Mammary epithelial cell (primary cell): ENCODE measurements at regions of chr15 and their contacts with region 1.

Region 1: DNA sequence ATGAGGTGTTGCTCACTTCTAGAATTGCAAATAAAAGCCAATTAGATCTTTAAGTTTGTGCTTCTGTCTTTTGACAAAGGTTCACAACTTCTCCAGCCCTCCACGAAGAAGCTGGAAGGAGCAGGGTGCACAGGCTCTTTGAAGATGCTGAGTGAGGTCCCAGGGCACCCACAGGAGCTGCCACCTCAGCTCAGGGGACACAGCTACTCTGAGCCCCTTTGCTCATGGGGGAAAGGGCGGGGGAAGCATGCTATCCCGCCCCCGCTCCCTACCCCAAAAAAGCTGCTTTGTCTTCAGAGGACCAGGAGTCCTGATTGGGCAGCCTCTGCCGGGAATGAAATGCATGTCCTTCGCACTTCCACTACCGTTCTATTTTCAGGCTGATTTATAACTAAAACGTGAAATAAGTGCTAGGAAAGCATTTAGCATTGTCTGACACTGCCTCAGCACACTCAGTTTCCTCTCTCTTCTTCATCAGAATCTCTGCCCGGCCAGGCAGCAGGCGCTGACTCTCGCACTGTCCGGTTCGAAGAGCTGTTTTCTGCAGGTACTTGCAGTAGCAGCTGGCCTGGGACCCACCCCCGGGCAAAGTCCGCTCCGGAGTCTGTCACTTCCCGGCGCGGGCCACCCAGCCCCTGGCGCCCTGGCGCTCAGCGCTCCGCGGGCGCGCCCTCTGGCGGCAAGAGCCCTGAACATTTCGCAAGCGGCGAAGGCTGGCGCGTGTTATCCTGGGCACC is 45.5 kb upstream of the KLHL25 start:
- DNase-seq: peak; percentile 63
- H3K4me3 ChIP-seq: peak overlapping the region in 2 of 3 experiments; percentile 3 to 35
- H3K27ac ChIP-seq: no peak overlapping the region
- H3K4me1 ChIP-seq: peaks cover 4% of the 10 kb centered on the region
- H3K27me3 ChIP-seq: no peaks in the 10 kb centered on the region
- CTCF ChIP-seq: peak; percentile 55 to 97

Region 2: DNA sequence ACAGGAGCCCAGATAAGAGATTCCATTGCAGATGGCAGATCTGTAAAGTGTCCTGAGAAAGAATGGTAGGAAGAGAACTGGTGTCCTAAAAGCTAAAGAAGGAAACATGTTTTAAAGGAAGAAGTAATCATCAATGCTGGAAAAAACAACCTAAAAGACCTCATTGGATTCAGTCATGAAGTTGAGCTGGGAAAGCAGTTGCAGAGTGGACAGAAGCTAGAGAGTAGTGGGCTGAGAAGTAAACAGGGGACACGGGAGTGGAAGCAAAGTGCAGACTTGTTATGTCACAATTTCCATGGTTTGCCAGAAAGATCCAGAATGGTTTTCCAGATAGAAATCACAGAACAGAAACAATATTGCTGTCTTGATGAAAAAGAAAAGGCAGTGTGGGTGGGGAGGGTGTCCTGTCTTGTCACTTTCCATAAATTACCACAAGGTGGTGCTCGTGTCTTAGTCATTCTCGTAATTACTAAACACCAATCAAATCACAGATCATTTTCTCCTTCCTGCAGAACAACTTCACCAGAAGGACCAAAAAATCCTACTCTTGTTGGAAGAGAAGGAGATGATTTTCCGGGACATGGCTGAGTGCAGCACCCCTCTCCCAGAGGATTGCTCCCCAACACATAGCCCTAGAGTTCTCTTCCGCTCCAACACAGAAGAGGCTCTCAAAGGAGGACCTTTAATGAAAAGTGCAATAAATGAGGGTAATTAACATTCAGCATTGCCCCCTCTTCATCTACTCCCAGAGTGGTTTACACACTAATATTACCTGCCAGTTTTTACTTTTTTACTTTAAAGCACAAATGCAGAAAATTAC is 110.0 kb before region 1 on chr15:
- CTCF ChIA-PET with region 1: no interaction called
- dilution Hi-C with region 1: no loop called
- in situ Hi-C with region 1: no loop called
- intact Hi-C with region 1: loop called (anchors 1 kb)
- DNase-seq: peak; percentile 53
- H3K4me3 ChIP-seq: no peak overlapping the region
- H3K27ac ChIP-seq: no peak overlapping the region
- H3K4me1 ChIP-seq: peaks cover 6% of the 10 kb centered on the region
- H3K27me3 ChIP-seq: no peaks in the 10 kb centered on the region
- CTCF ChIP-seq: peak; percentile 62 to 78

Region 3: DNA sequence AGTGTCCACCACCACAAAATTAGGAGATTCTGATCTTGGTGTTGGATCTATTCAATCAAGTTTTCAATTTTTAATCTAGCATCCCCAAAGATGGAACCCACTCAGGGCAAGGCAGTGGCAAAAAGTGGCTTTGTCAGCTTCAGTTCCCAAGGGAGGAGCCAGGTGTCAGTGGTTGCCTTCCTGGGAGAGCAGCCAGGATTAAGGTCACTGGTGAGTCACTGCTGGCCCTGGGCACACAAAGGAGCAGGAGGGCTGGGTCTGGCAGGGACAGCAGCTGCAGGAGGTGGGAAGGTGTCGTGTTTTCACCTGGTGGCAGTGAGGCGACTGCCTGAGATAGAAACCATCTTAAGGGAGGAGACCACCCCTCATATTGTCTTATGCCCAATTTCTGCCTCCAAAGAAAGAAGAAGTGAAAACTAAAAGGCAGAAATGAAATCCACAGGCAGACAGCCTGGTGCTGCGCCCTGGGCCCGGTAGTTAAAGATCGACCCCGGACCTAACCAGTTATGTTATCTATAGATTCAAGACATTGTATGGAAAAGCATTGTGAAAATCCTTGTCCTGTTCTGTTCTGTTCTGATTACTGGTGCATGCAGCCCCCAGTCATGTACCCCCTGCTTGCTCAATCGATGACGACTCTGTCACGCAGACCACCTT is 39.6 kb before region 1 on chr15:
- CTCF ChIA-PET with region 1: interaction called, 3 read pairs
- dilution Hi-C with region 1: no loop called
- in situ Hi-C with region 1: no loop called
- intact Hi-C with region 1: loop called (anchors 2 kb)
- DNase-seq: peak; percentile 74
- H3K4me3 ChIP-seq: no peak overlapping the region
- H3K27ac ChIP-seq: no peak overlapping the region
- H3K4me1 ChIP-seq: peaks cover 6% of the 10 kb centered on the region
- H3K27me3 ChIP-seq: no peaks in the 10 kb centered on the region
- CTCF ChIP-seq: peak; percentile 26 to 68

Region 4: GRCh38 chr15:85858586-85859375 is 18.5 kb after region 1 on chr15:
- CTCF ChIA-PET with region 1: no interaction called
- dilution Hi-C with region 1: no loop called
- in situ Hi-C with region 1: no loop called
- intact Hi-C with region 1: no loop called
- DNase-seq: peak; percentile 48
- H3K4me3 ChIP-seq: no peak overlapping the region
- H3K27ac ChIP-seq: no peak overlapping the region
- H3K4me1 ChIP-seq: peaks cover 3% of the 10 kb centered on the region
- H3K27me3 ChIP-seq: no peaks in the 10 kb centered on the region
- CTCF ChIP-seq: peak; percentile 65 to 81

Region 5: DNA sequence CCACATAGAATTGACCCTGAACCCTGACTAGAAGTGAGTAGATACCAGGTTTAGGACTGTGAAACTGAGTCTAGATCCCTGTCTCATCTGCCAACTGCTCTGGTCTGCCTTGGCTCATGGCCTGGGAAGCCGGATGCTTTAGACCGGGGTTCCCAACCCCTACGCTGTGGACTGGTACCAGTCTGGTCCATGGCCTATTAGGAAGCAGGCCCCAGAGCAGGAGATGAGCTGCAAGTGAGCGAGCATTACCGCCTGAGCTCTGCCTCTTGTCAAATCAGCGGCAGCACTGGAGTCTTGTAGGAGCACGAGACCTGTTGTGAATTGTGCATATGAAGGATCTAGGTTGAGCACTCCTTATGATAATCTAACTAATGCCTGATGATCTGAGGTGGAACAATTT is 973.7 kb after region 1 on chr15:
- CTCF ChIA-PET with region 1: interaction called, 13 read pairs
- dilution Hi-C with region 1: no loop called
- in situ Hi-C with region 1: no loop called
- intact Hi-C with region 1: no loop called
- DNase-seq: no peak
- H3K4me3 ChIP-seq: no peak overlapping the region
- H3K27ac ChIP-seq: no peak overlapping the region
- H3K4me1 ChIP-seq: no peaks in the 10 kb centered on the region
- H3K27me3 ChIP-seq: peaks cover 3% of the 10 kb centered on the region
- CTCF ChIP-seq: no peak